CD4-positive, alpha-beta T cell (primary cell): ENCODE measurements at regions of chr7 and their contacts with region 1.

Region 1: DNA sequence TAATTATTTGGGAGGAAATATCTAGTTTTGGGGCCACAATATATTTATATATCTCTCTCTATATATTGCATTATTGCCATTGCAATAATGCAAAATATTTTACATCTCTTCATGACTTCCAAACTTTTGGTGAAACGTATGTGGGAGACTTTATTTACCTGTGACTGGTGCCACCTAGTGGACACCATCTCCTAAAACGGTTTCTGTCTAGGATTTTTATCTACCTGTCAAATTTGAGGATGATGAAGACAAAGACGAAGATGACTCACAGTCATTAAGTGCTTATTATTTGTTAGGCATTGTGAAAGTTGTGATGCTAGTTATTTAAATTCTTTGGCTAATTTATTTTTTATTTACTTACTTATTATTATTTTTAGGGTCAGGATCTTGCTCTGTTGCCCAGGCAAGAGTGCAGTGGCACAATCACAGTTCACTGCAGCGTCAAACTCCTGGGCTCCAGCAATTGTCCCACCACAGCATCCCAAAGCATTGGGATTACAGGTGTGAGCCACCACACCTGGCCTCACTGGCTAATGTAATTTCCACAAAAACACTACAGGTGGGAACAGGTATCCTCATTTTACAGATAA is 18.7 kb upstream of the CBLL1 start:
- DNase-seq: peak in 13 of 14 experiments; percentile 4 to 79 (median 29)
- ATAC-seq: no peak
- H3K4me3 ChIP-seq: no peak overlapping the region
- H3K4me3 Mint-ChIP-seq: no peak overlapping the region
- H3K27ac ChIP-seq: no peak overlapping the region
- H3K27ac Mint-ChIP-seq: no peak overlapping the region
- H3K4me1 ChIP-seq: no peaks in the 10 kb centered on the region
- H3K4me1 Mint-ChIP-seq: no peaks in the 10 kb centered on the region
- H3K27me3 ChIP-seq: no peaks in the 10 kb centered on the region
- H3K27me3 Mint-ChIP-seq: peaks cover 9% of the 10 kb centered on the region
- CTCF ChIP-seq: peak; percentile 78

Region 2: DNA sequence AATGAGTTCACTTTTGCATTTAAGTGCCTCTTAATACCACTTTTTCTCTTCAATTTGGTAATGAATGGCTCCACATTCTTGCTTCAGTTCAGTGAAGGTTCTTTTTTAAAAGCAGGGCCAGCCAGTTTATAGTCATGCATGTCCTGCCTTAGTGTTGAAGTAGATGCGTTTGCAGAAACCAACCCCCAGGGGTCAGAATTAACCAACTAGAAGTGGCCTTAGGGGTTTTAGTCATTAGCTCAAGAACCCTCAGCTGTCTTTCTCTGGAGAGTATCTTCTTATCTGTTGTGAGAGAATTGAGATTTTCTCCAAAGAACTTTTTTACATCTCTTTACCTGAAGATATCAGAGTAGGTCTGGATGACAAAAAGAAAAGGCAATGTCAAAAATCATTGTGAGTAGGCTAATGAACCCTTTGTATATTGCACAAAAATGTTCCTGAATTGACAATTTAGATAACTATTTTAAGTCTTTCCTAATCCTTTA is 778.0 kb before region 1 on chr7:
- CTCF ChIA-PET with region 1: no interaction called
- POLR2A ChIA-PET with region 1: no interaction called
- intact Hi-C with region 1: loop called (anchors 10 kb)
- DNase-seq: peak in 8 of 14 experiments; percentile 5 to 66 (median 30)
- ATAC-seq: peak; percentile 59
- H3K4me3 ChIP-seq: no peak overlapping the region
- H3K4me3 Mint-ChIP-seq: no peak overlapping the region
- H3K27ac ChIP-seq: no peak overlapping the region
- H3K27ac Mint-ChIP-seq: no peak overlapping the region
- H3K4me1 ChIP-seq: no peaks in the 10 kb centered on the region
- H3K4me1 Mint-ChIP-seq: no peaks in the 10 kb centered on the region
- H3K27me3 ChIP-seq: no peaks in the 10 kb centered on the region
- H3K27me3 Mint-ChIP-seq: no peaks in the 10 kb centered on the region
- CTCF ChIP-seq: peak; percentile 33

Region 3: GRCh38 chr7:107201795-107202450 is 523.3 kb before region 1 on chr7:
- CTCF ChIA-PET with region 1: no interaction called
- POLR2A ChIA-PET with region 1: no interaction called
- intact Hi-C with region 1: loop called in 1 of 2 experiments (anchors 5 kb)
- DNase-seq: peak in 7 of 14 experiments; percentile 13 to 52 (median 25)
- ATAC-seq: peak; percentile 72
- H3K4me3 ChIP-seq: no peak overlapping the region
- H3K4me3 Mint-ChIP-seq: no peak overlapping the region
- H3K27ac ChIP-seq: no peak overlapping the region
- H3K27ac Mint-ChIP-seq: peak overlapping the region; percentile 19
- H3K4me1 ChIP-seq: no peaks in the 10 kb centered on the region
- H3K4me1 Mint-ChIP-seq: no peaks in the 10 kb centered on the region
- H3K27me3 ChIP-seq: no peaks in the 10 kb centered on the region
- H3K27me3 Mint-ChIP-seq: no peaks in the 10 kb centered on the region
- CTCF ChIP-seq: peak; percentile 23

Region 4: DNA sequence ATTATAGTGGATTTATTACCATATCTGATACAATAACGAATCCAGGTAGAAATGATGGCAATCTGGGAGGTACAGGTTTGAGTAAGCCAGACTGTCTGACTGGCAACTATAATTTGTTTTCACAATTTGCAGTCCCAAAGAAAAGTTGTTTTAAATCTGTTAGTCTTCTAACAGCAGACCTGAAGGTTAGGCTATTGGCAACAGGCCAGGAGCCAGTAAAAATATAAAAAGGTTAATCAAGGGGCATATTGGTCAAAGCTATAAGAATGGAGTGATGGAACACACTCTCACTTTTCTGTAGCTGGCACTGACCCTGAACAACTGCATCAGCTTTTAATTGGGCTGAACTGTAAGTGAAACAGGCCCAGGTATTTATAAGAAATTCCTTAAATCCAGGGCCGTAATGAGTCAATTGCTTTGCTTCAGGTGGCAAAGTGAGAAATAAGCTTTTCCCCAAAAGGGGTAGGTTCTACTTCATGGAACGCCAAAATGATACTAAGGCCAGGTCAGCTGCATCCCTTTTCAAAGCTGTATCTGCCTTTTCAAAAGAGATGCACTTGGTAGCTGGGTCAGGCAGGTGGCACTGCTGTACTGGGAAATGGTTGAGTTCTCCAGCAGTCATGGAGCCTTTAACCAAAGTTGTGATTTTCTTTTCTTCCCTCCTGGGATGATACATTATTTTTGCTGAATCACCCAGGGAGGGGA is 262.4 kb before region 1 on chr7:
- CTCF ChIA-PET with region 1: interaction called, 5 read pairs
- POLR2A ChIA-PET with region 1: interaction called, 5 read pairs
- intact Hi-C with region 1: loop called (anchors 1 kb)
- DNase-seq: peak; percentile 10 to 76 (median 32)
- ATAC-seq: peak; percentile 73
- H3K4me3 ChIP-seq: no peak overlapping the region
- H3K4me3 Mint-ChIP-seq: no peak overlapping the region
- H3K27ac ChIP-seq: no peak overlapping the region
- H3K27ac Mint-ChIP-seq: no peak overlapping the region
- H3K4me1 ChIP-seq: no peaks in the 10 kb centered on the region
- H3K4me1 Mint-ChIP-seq: peaks cover 4% of the 10 kb centered on the region
- H3K27me3 ChIP-seq: no peaks in the 10 kb centered on the region
- H3K27me3 Mint-ChIP-seq: no peaks in the 10 kb centered on the region
- CTCF ChIP-seq: peak; percentile 60